ENCODE measurements at regions of chr7 and their contacts with region 1.

Region 1: DNA sequence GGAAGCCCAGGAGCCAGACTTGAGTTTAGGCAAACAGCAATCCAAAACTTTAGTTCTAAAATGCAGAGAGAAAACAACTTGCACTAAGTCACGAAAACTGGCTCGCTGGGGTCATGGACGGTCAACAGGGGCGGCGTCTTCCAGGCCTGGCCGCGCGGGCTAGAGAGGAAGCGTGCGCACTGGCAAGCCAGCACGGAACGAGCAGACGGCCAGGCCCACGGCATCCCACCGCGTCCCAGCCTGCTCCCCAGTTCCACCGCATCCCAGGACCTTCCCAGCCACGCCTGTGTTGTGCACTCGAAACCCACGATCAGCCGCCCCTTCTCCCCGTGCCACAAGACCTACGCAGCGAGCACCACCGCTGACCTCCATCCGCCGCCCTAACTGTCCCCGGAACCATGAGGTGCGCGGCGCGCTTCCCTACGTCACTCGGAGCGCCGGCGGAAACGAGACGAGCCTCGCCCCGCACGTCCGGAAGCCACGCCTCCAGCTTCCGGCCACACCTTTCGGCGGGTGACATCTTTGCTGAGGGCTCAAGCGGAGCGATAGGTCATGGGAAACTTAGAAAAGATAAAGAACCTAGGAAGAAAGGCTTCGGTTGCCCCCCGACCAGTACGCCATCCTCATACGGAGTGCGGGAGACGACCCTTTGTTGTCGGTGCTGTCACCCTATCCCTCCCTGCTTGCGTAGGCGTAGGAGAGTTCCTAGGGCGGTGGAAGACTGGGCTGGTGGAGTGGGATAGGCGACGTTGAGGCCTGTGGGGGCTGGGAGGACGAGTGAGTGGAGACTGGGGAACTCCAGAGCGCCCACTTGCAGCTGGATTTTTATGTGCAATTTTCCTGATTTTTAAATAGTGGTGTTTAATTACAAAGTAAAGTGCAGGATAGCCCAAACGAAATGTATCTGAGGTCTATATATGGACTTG is at the start of gene TBRG4:
- DNase-seq: peak; percentile 93 to 97 (median 96)
- ATAC-seq: peak; percentile 99
- H3K4me3 ChIP-seq: peak within 1 kb of the TSS; percentile 51 to 92 (median 78)
- H3K27ac ChIP-seq: peak within 1 kb of the TSS; percentile 86 to 98 (median 94)
- H3K4me1 ChIP-seq: peaks cover 5 to 49% (median 38%) of the 10 kb centered on the region in 12 donors
- H3K27me3 ChIP-seq: no peaks in the 10 kb centered on the region
- CTCF ChIP-seq: peak in 11 of 12 donors; percentile 16 to 63 (median 40)
- POLR2A ChIP-seq: peak in 1 of 2 donors; percentile 81
- total RNA-seq, gene TBRG4: 58.0 to 96.1 (median 61.5) TPM

Region 2: DNA sequence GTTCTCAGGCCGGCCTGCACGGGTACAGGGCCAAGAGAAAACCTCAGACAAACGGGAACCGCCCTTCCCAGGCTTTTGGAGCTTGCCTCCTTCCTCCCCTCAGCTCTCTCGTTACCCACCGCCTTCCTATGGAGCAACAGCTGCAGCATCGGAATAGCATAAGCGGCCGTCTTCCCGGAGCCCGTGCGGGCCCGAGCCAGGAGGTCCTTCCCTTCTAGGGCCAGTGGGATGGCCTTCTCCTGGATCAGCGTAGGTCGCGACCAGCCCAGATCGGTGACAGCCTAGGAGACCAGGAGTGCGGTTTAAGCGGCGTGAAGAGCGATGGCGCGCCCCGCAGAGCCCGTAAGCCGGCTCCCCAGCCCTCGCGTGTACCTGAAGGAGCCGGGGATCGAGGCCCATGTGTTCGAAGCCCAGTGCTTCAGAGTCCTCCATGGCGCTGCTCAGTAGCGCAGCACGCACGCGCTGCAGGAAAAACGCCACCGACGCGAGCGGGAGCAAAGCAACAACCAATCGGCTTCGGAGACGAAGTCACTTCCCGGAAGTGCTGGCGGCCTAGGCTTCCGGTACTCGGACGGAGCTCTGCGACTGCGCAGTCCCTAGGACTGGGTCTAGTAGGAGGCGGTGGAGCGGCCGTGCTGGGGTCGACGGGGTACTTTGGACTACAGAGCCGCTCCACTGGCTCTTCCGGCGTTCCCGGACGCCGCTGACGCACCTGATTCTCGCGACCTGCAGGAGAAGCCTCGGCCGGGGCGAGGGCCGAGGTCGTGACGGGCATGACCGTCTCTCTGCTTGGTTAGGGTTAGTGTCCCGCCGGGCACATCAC is 537.9 kb before region 1 on chr7 and contains the start of gene DDX56:
- intact Hi-C with region 1: loop called in 1 of 10 experiments (anchors 10 kb)
- DNase-seq: peak; percentile 94 to 97 (median 97)
- ATAC-seq: peak; percentile 96 to 98 (median 97)
- H3K4me3 ChIP-seq: peak within 1 kb of the TSS; percentile 65 to 97 (median 86)
- H3K27ac ChIP-seq: peak within 1 kb of the TSS; percentile 53 to 95 (median 88)
- H3K4me1 ChIP-seq: peaks cover 4 to 30% (median 20%) of the 10 kb centered on the region in 12 donors
- H3K27me3 ChIP-seq: no peaks in the 10 kb centered on the region
- CTCF ChIP-seq: peak in 2 of 12 donors; percentile 6 to 12
- POLR2A ChIP-seq: peak; percentile 58 to 94
- total RNA-seq, gene DDX56: 19.4 to 43.4 (median 28.4) TPM

Region 3: DNA sequence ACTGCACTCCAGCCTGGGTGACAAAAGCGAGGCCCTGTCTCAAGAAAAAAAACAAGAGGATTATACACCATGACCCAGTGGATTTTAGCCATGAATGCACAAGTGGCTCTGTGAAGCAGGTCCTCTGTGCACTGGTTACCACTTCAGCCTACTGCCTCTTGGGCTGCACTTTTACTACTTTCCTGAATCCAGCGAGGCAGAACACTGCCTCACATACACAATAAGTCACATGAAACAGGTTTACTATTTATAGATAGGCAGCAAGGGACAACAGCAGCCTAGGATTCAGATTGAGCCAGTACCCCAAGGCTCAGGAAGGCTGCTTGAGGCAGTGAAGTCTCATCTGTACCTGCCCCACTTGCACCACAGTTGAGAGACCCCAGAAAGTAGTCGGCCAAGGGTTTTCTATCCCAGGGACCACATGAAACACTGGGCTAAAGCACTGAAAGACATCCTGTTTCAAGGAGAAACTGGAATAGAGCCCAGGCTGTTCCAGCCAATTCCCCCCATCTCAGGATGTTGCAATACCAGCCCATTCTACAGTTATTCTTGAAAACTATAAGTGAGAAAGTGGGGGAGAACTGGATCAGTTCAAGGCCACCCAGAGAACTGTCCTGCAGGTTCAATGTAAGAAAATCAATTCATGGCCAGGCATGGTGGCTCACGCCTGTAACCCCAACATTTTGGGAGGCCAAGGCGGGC is 515.5 kb before region 1 on chr7:
- intact Hi-C with region 1: loop called in 1 of 10 experiments (anchors 10 kb)
- DNase-seq: no peak
- ATAC-seq: peak; percentile 88 to 96 (median 94)
- H3K4me3 ChIP-seq: no peak overlapping the region
- H3K27ac ChIP-seq: peak overlapping the region in 10 of 12 donors; percentile 25 to 86 (median 71)
- H3K4me1 ChIP-seq: peaks cover 0 to 16% (median 3%) of the 10 kb centered on the region in 12 donors
- H3K27me3 ChIP-seq: no peaks in the 10 kb centered on the region
- CTCF ChIP-seq: peak in 3 of 12 donors; percentile 8 to 17 (median 15)
- POLR2A ChIP-seq: peak in 1 of 2 donors; percentile 13

Region 4: GRCh38 chr7:44973610-44974401 is 137.8 kb before region 1 on chr7:
- intact Hi-C with region 1: loop called in 2 of 10 experiments (anchors 5 kb)
- DNase-seq: peak in 3 of 5 donors; percentile 52 to 60 (median 54)
- ATAC-seq: peak in 3 of 4 donors; percentile 58 to 71 (median 68)
- H3K4me3 ChIP-seq: no peak overlapping the region
- H3K27ac ChIP-seq: no peak overlapping the region
- H3K4me1 ChIP-seq: peaks cover 0 to 28% (median 0%) of the 10 kb centered on the region in 12 donors
- H3K27me3 ChIP-seq: no peaks in the 10 kb centered on the region
- CTCF ChIP-seq: peak; percentile 31 to 66 (median 55)
- POLR2A ChIP-seq: no peak

Region 5: DNA sequence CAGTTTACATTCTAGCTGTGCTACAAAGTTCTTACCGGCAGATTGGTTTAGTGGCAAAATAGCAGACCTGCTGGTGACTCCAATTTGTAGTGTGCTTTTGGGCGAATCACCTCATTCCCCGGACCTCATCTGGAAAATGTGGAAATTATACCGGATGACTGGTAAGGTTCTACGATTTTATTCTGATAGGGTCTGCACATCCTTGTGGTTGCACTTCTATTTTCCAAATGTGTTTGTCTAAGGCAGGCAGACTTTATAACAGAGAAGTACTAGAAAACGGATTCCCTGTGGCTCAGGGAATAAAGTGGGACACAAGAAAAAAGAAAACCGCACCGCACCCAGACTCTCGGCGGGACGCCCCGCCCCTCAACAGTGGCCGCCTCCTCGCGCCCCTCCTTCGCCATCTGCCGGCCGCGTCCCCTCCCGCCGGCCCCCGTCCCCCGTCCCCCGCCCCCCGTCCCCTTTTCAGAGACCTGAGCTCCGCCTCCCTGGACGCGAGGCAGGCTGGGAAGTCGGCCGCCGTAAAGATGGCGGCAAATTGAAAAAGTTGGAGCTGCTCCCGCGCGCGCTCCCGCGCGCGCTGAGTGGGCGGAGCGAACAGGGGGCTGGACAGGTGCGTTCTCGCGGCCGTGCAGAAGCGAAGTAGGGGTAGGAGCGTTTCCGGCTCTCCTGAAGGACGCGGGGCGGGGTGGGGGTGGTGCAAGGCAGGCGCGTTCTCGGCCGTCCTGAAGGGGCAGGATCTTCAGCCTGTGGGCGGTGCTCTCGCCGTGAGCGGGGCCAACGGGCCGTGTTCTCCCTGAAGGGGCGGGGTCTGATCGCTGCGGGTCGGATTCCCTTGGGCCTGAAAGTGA is 112.1 kb before region 1 on chr7:
- intact Hi-C with region 1: loop called in 6 of 10 experiments (anchors 1 to 5 kb)
- DNase-seq: peak; percentile 99 to 100 (median 100)
- ATAC-seq: peak; percentile 94 to 98 (median 96)
- H3K4me3 ChIP-seq: peak overlapping the region; percentile 28 to 85 (median 72)
- H3K27ac ChIP-seq: peak overlapping the region; percentile 47 to 95 (median 88)
- H3K4me1 ChIP-seq: peaks cover 0 to 43% (median 13%) of the 10 kb centered on the region in 12 donors
- H3K27me3 ChIP-seq: no peaks in the 10 kb centered on the region
- CTCF ChIP-seq: peak in 7 of 12 donors; percentile 4 to 30 (median 11)
- POLR2A ChIP-seq: peak in 1 of 2 donors; percentile 54

Measured in heart left ventricle (tissue), 16 donors.